Posterior vena cava (tissue), 2 donors: ENCODE measurements at regions of chr12 and their contacts with region 1.

Region 1: GRCh38 chr12:93733358-93733757 is 56.2 kb downstream of the CRADD start:
- DNase-seq: no peak

Region 2: GRCh38 chr12:93682846-93683261 is 50.5 kb before region 1 on chr12:
- intact Hi-C with region 1: loop called in 1 of 2 experiments (anchors 10 kb)
- DNase-seq: no peak